GM12878 (cell line): ENCODE measurements at regions of chr6 and their contacts with region 1.

Region 1: DNA sequence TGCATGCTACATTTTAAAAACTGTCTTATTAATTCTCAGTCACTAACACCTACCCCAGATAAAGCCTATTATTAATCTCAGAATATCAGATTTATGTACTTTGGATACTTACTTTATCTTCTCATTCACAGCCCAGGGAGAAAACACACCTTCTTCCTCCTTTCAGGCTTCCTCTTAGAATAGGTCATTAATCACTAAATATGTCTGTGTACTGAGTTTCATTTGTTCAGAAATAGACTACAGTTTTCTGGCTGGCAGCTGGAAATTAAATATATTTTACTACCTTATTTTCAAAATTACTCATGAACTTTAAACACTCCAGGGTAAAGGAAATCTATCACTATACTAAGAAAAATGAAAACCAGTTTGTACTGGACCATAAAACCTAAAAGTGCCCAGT is 147.7 kb upstream of the DST start:
- DNase-seq: no peak
- ATAC-seq: peak; percentile 72
- H3K4me3 ChIP-seq: no peak overlapping the region
- H3K27ac ChIP-seq: peak overlapping the region; percentile 82
- H3K4me1 ChIP-seq: peaks cover 41% of the 10 kb centered on the region
- H3K27me3 ChIP-seq: no peaks in the 10 kb centered on the region
- CTCF ChIP-seq: no peak
- EP300 ChIP-seq: peak in 1 of 2 experiments; percentile 65; a peak in 1 of 4 replicates
- POLR2A ChIP-seq: no peak
- RAD21 ChIP-seq: no peak

Region 2: GRCh38 chr6:56802584-56802983 is 12.2 kb after region 1 on chr6:
- CTCF ChIA-PET with region 1: interaction called, 7 read pairs
- POLR2A ChIA-PET with region 1: no interaction called
- RAD21 ChIA-PET with region 1: interaction called, 4 read pairs
- SMC1A ChIA-PET with region 1: interaction called, 14 read pairs
- in situ Hi-C with region 1: no loop called
- intact Hi-C with region 1: no loop called
- DNase-seq: no peak
- ATAC-seq: no peak
- H3K4me3 ChIP-seq: no peak overlapping the region
- H3K27ac ChIP-seq: no peak overlapping the region
- H3K4me1 ChIP-seq: peaks cover 19% of the 10 kb centered on the region; the same call in 1 of the 2 replicates
- H3K27me3 ChIP-seq: no peaks in the 10 kb centered on the region
- CTCF ChIP-seq: no peak
- EP300 ChIP-seq: no peak
- POLR2A ChIP-seq: no peak
- RAD21 ChIP-seq: no peak

Region 3: GRCh38 chr6:56938649-56939191 is 148.3 kb after region 1 on chr6:
- CTCF ChIA-PET with region 1: no interaction called
- POLR2A ChIA-PET with region 1: no interaction called
- RAD21 ChIA-PET with region 1: no interaction called
- SMC1A ChIA-PET with region 1: no interaction called
- in situ Hi-C with region 1: no loop called
- intact Hi-C with region 1: no loop called
- DNase-seq: no peak
- ATAC-seq: peak; percentile 29; the same call in 2 of the 3 replicates
- H3K4me3 ChIP-seq: no peak overlapping the region
- H3K27ac ChIP-seq: no peak overlapping the region
- H3K4me1 ChIP-seq: no peaks in the 10 kb centered on the region; the same call in 1 of the 2 replicates
- H3K27me3 ChIP-seq: no peaks in the 10 kb centered on the region
- CTCF ChIP-seq: no peak
- EP300 ChIP-seq: no peak
- POLR2A ChIP-seq: no peak
- RAD21 ChIP-seq: no peak